Caco-2 (cell line): ENCODE measurements at regions of chr11 and their contacts with region 1.

Region 1: DNA sequence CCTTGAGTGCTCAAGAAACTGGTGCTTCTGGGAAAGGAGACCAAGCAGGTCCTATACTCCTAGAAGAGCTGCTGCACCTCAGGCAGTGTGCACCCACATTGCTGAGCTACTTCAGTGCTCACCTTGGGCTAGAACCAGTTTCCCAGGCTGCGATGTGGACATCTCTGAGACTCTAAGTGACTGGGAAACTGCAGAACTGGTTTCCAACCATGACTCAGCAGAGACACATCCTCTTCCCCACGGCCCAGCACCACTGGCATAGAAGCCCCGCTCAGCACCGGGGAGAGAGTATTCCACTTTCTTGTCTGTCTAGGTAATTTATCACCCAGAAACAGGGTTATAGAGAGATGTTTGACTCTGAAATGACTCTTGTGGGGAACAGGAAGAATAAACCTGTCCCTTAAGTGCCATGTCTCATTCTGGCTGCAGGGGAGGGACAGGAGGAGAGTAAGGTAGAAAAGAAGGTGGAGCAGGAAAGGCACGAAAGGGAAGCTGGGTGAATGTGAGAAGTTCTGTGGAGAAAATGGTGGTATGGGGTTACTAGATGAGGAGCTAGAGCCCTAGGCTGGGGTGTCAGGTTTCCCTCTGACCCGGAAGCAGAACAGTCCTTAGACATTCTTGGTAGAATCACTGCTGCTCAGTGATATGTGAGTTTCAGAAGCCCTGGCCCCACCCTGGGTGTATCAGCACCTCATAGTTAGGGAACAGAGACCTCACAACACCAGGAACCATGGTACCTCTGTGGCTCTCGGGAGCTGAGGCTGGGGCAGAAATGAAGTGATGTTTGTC is 340.4 kb upstream of the NCAM1 start:
- DNase-seq: peak in 1 of 2 experiments; percentile 14
- H3K4me3 ChIP-seq: no peak overlapping the region
- H3K4me3 Mint-ChIP-seq: no peak overlapping the region
- H3K27ac Mint-ChIP-seq: no peak overlapping the region
- H3K4me1 ChIP-seq: no peaks in the 10 kb centered on the region
- H3K4me1 Mint-ChIP-seq: no peaks in the 10 kb centered on the region
- H3K27me3 ChIP-seq: no peaks in the 10 kb centered on the region
- H3K27me3 Mint-ChIP-seq: peaks cover 7% of the 10 kb centered on the region
- CTCF ChIP-seq: no peak

Region 2: GRCh38 chr11:112096194-112096593 is 524.6 kb before region 1 on chr11:
- CTCF ChIA-PET with region 1: no interaction called
- POLR2A ChIA-PET with region 1: no interaction called
- intact Hi-C with region 1: no loop called
- DNase-seq: no peak
- H3K4me3 ChIP-seq: no peak overlapping the region
- H3K4me3 Mint-ChIP-seq: no peak overlapping the region
- H3K27ac Mint-ChIP-seq: no peak overlapping the region
- H3K4me1 ChIP-seq: no peaks in the 10 kb centered on the region
- H3K4me1 Mint-ChIP-seq: no peaks in the 10 kb centered on the region
- H3K27me3 ChIP-seq: no peaks in the 10 kb centered on the region
- H3K27me3 Mint-ChIP-seq: no peaks in the 10 kb centered on the region
- CTCF ChIP-seq: no peak

Region 3: GRCh38 chr11:112404112-112404511 is 216.7 kb before region 1 on chr11:
- CTCF ChIA-PET with region 1: no interaction called
- POLR2A ChIA-PET with region 1: no interaction called
- intact Hi-C with region 1: no loop called
- DNase-seq: no peak
- H3K4me3 ChIP-seq: no peak overlapping the region
- H3K4me3 Mint-ChIP-seq: no peak overlapping the region
- H3K27ac Mint-ChIP-seq: no peak overlapping the region
- H3K4me1 ChIP-seq: no peaks in the 10 kb centered on the region
- H3K4me1 Mint-ChIP-seq: no peaks in the 10 kb centered on the region
- H3K27me3 ChIP-seq: no peaks in the 10 kb centered on the region; the same call in 1 of the 2 replicates
- H3K27me3 Mint-ChIP-seq: peaks cover 3% of the 10 kb centered on the region
- CTCF ChIP-seq: no peak

Region 4: DNA sequence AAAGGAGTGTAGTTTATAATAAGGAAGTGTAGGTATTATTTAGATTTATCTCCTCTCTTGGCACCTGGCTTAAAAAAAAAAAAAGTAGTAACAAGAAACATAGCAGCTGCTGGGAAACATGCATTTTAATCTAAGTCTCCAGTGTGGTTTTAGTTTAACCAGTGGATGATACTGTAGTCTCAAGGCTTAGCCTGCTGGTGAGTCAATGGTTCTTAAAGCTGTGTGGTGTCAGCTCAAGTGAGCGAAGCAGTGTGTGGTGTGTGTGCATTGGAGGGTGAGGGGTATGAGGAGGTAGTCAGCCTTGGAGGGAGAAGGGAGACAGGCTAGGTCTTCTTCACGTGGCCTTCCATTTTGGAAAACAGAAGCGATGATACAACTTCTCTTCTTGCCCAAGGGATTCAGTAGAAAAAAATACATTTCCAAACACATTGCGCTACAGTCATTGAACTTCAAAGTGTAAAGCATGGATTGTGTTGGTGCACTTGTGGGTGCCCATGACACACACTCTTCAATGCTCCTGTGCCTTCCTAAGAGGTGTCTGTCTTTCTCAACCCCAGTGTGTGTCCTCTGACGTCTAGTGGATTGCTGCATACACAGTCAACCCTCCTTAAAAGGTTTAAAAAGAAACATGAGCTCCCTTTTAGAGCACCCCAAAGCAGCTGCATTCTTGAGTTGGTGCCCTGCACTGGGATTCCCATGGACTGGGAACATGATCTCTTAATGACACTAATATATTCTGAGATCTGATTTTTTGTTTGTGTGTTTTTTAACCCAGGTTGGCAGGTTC is 1478.8 kb after region 1 on chr11:
- CTCF ChIA-PET with region 1: interaction called, 11 read pairs
- POLR2A ChIA-PET with region 1: no interaction called
- intact Hi-C with region 1: no loop called
- DNase-seq: peak in 1 of 2 experiments; percentile 38
- H3K4me3 ChIP-seq: no peak overlapping the region
- H3K4me3 Mint-ChIP-seq: peak overlapping the region; percentile 2
- H3K27ac Mint-ChIP-seq: peak overlapping the region; percentile 68
- H3K4me1 ChIP-seq: peaks cover 37% of the 10 kb centered on the region
- H3K4me1 Mint-ChIP-seq: peaks cover 59% of the 10 kb centered on the region
- H3K27me3 ChIP-seq: no peaks in the 10 kb centered on the region
- H3K27me3 Mint-ChIP-seq: no peaks in the 10 kb centered on the region
- CTCF ChIP-seq: no peak